ENCODE measurements at regions of chr12 and their contacts with region 1.

Region 1: GRCh38 chr12:56020423-56021184 is at the start of gene IKZF4:
- DNase-seq: peak; percentile 79 to 92 (median 90)
- H3K4me3 ChIP-seq: peak within 1 kb of the TSS in 2 of 4 donors; percentile 12 to 39
- H3K27ac ChIP-seq: peak within 1 kb of the TSS; percentile 35 to 90 (median 63)
- H3K4me1 ChIP-seq: peaks cover 28 to 41% of the 10 kb centered on the region in 2 donors
- H3K27me3 ChIP-seq: no peaks in the 10 kb centered on the region
- CTCF ChIP-seq: no peak
- POLR2A ChIP-seq: peak in 1 of 2 donors; percentile 41
- total RNA-seq, gene IKZF4: 6.0 to 34.0 (median 13.3) TPM

Region 2: GRCh38 chr12:56165369-56165768 is 144.8 kb after region 1 on chr12:
- intact Hi-C with region 1: loop called in 1 of 2 experiments (anchors 5 kb)
- DNase-seq: no peak
- H3K4me3 ChIP-seq: no peak overlapping the region
- H3K27ac ChIP-seq: no peak overlapping the region
- H3K4me1 ChIP-seq: peaks cover 11 to 13% of the 10 kb centered on the region in 2 donors
- H3K27me3 ChIP-seq: no peaks in the 10 kb centered on the region
- CTCF ChIP-seq: no peak
- POLR2A ChIP-seq: no peak

Measured in adrenal gland (tissue), 19 donors.